Dorsolateral prefrontal cortex (tissue), 120 donors: ENCODE measurements at regions of chr2 and their contacts with region 1.

Region 1: DNA sequence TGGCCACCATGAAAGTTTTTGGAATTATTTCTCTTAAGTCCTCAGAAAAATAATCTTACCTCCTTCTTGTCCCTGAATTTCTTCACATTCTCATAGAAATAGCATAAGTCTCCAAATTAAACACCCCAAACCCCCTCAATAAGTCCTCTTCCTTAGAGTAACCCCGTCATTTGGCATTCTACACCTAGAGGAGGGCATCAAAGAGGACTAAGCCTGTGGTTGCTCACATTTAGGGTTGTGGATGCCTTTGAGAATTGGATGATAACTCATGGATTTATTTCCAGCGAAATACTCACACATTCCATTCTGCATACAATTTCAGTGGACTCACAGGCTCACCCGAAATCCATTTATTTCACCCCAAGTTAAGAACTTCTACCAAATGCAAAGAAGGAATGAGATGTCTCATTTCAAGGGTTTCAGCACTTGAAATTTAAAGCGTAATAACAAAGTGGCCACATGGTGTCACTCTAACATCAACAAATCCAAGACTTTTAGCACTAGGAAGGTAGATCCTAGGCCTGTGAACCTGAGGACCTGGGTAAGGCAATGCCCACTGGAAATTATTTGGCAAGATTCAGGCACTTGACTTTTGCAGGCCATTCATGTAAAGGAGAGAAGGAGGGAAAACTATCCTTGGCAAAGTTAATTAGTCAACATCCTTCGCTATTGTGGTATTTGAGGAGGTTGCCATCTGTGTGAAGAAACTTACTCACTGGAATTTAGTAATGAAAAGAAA is 24.6 kb downstream of the DYTN start:
- DNase-seq: peak in 1 of 10 donors; percentile 36
- H3K4me3 ChIP-seq: no peak overlapping the region
- H3K27ac ChIP-seq: no peak overlapping the region
- H3K27me3 ChIP-seq: peaks cover 0 to 3% (median 0%) of the 10 kb centered on the region in 45 donors
- CTCF ChIP-seq: peak; percentile 59 to 88 (median 73)

Region 2: DNA sequence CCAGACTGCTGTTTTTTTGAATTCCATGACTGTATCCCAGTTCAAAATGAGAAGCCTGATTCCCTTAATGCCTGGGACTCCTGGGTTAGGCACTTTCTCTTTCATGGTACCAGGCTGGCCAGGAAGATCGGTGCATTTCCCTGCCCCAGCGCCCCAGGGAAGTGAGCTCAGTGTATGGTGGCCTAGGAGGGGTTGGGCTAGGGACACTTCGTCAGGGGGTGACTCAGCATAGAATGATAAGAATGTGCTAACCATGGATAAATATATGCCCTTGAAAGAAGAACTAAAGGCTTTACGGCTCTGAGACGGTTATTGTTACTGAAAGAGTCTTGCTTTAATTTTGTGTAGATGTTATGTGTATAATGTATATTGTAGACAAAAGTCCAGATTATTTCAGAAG is 78.7 kb before region 1 on chr2:
- intact Hi-C with region 1: no loop called
- DNase-seq: no peak
- H3K4me3 ChIP-seq: no peak overlapping the region
- H3K27ac ChIP-seq: no peak overlapping the region
- H3K27me3 ChIP-seq: no peaks in the 10 kb centered on the region
- CTCF ChIP-seq: no peak

Region 3: GRCh38 chr2:206780671-206781070 is 87.1 kb after region 1 on chr2:
- intact Hi-C with region 1: loop called in 1 of 2 experiments (anchors 2 kb)
- DNase-seq: no peak
- H3K4me3 ChIP-seq: no peak overlapping the region
- H3K27ac ChIP-seq: no peak overlapping the region
- H3K27me3 ChIP-seq: no peaks in the 10 kb centered on the region
- CTCF ChIP-seq: no peak

Region 4: DNA sequence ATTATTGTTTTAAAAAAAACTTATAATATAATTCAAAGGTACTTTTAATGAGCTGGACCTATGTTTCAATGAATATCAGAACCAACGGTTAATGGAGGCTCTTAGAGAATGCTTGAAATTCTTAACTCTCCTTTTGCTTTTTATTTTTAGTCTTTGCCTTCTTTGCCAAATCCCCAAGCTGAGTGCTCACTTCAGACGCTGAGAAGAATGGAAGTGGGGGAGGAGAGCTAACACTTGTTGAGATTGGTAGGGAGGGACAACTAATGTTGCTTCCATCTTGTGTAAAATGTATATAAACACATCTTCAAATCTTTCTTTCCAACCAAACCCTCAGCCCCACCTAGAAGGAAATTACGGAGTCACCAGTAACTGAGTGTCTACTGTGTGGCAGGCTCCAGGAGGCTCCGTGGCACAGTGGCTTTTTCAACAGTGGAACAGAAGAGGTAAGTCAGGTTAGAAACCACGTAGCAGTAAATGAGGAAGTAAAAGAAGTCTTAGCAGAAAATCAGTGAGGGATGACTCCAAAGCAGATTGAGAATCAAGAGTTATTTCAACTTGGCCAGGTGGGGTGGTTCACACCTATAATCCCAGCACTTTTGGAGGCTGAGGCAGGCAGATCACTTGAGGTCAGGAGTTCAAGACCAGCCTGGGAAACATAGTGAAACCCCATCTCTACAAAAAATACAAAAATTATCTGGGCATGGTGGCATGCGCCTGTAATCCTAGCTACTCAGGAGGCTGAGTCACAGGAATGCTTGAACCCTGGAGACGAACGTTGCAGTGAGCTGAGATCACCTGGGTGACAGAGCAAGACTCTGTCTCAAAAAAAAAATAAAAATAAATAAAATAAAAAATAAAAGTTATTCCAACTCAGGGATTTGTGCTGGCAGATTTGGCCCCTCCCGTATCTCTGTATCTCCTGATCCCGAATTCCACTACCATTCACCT is 791.1 kb after region 1 on chr2:
- intact Hi-C with region 1: loop called (anchors 5 to 10 kb)
- DNase-seq: no peak
- H3K4me3 ChIP-seq: no peak overlapping the region
- H3K27ac ChIP-seq: no peak overlapping the region
- H3K27me3 ChIP-seq: no peaks in the 10 kb centered on the region
- CTCF ChIP-seq: no peak